ENCODE measurements at regions of chr5 and their contacts with region 1.

Region 1: GRCh38 chr5:176537608-176538504 is 654 bp upstream of the RNF44 start:
- DNase-seq: peak; percentile 84
- ATAC-seq: peak; percentile 73
- H3K4me3 Mint-ChIP-seq: peak overlapping the region; percentile 97
- H3K27ac Mint-ChIP-seq: peak overlapping the region; percentile 95
- H3K4me1 Mint-ChIP-seq: peaks cover 72% of the 10 kb centered on the region
- H3K27me3 Mint-ChIP-seq: no peaks in the 10 kb centered on the region
- CTCF ChIP-seq: no peak

Region 2: GRCh38 chr5:176361437-176362232 is 176.2 kb before region 1 on chr5 and contains the start of gene KIAA1191:
- CTCF ChIA-PET with region 1: no interaction called
- POLR2A ChIA-PET with region 1: interaction called, 14 read pairs
- intact Hi-C with region 1: loop called (anchors 1 kb)
- DNase-seq: peak; percentile 86
- ATAC-seq: peak; percentile 87
- H3K4me3 Mint-ChIP-seq: peak within 1 kb of the TSS; percentile 99
- H3K27ac Mint-ChIP-seq: peak within 1 kb of the TSS; percentile 98
- H3K4me1 Mint-ChIP-seq: peaks cover 28% of the 10 kb centered on the region
- H3K27me3 Mint-ChIP-seq: no peaks in the 10 kb centered on the region
- CTCF ChIP-seq: no peak
- total RNA-seq, gene KIAA1191: 56.6 and 57.5 TPM in 2 replicates

Region 3: DNA sequence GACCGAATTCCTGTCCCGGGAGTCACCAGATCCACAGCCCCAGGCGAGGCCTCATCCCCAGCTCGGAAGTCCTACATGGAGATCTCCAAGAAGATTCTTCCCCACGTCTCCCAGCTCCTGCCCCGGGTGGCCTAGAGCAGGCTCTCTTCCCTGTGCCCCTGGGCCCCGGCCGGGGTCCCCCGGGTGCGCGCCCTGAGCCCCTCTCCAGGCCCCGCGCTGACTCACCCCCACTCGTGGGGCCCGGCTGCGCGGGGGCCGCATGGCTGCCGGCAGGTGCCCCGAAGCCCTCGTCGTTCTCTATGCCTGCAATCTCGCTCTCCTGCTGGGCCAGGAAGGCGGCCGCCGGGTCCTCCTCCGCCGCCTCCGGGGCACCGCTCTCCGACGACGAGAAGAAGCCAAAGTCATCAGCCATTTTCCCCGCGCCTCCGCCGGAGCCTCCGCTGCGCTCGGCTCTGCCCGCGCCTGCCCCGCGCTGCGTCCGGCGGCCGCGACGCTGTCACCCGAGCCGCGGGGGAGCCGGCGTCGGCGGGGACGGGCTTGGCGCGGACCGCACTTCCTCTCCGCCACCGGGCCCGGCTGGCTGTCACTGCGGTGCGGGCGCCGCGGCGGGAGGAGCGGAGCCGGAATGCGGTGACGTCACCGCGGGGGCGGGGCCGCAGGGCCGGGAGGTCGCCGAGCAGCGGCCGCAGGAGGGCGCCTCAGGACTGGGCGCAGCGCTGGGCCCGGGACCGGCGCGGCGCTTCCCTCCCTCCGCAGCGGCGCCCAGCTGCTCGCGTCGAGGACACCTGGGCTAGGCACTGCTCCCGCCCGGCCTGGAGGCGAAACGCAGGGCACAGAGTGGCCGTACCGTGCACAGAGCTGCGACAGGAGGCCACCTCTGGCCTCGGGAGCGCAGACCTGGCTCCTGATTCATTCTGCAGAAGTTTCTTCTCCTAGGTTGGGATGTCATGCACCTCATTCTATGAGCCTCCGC is 121.6 kb before region 1 on chr5 and contains the start of gene CLTB:
- CTCF ChIA-PET with region 1: interaction called, 18 read pairs
- POLR2A ChIA-PET with region 1: interaction called, 22 read pairs
- intact Hi-C with region 1: loop called (anchors 1 kb)
- DNase-seq: peak; percentile 80
- ATAC-seq: peak; percentile 97
- H3K4me3 Mint-ChIP-seq: peak within 1 kb of the TSS; percentile 80
- H3K27ac Mint-ChIP-seq: peak within 1 kb of the TSS; percentile 56
- H3K4me1 Mint-ChIP-seq: peaks cover 26% of the 10 kb centered on the region
- H3K27me3 Mint-ChIP-seq: peaks cover 8% of the 10 kb centered on the region
- CTCF ChIP-seq: no peak
- total RNA-seq, gene CLTB: 29.5 and 48.9 TPM in 2 replicates

Region 4: GRCh38 chr5:176514244-176514950 is 23.5 kb before region 1 on chr5:
- CTCF ChIA-PET with region 1: no interaction called
- POLR2A ChIA-PET with region 1: interaction called, 26 read pairs
- intact Hi-C with region 1: loop called (anchors 1 kb)
- DNase-seq: no peak
- ATAC-seq: peak; percentile 78
- H3K4me3 Mint-ChIP-seq: peak overlapping the region; percentile 71
- H3K27ac Mint-ChIP-seq: peak overlapping the region; percentile 88
- H3K4me1 Mint-ChIP-seq: peaks cover 23% of the 10 kb centered on the region
- H3K27me3 Mint-ChIP-seq: no peaks in the 10 kb centered on the region
- CTCF ChIP-seq: no peak

Region 5: DNA sequence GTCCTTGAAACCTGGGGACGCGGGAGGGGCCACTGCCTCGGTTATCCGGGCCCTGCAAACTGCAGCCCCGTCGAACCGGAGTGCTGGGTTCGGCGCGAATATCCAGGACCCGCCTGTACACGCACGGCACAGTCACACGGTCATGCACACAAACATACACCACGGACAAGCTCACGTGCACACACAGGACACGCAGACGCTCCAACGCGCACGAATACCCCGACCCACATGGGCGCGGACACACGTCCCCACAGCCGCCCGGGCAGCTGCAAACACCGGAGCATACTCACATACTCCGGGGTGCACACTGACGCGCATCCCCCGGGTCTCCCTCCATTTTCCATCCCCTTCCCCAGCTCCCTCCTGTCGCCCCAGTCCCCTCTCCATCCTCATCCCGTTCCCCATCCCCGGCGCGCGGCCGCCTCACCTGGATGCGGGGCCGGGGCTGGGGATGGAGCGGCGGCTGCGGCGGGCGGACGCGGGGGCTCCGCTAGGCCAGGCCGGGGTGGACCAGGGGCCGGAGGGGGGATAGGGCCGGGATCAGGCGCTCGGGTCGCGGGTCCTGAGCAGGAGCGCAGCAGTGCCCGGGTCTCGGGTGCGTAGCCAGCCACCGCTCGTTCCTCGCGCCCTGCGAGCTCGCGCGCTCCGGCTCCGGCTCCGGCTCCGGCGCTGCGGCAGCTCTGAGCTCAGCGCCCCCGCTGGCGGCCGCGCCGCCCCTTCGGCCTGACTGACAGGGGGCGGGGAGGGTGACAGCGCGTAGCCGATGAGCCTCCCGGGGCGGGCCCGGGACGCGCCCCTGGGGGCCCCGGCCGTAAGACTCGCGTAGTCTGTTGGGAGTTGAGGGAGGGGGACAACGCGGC is 92.2 kb after region 1 on chr5 and contains the starts of genes EIF4E1B and SNCB:
- CTCF ChIA-PET with region 1: no interaction called
- POLR2A ChIA-PET with region 1: interaction called, 9 read pairs
- intact Hi-C with region 1: loop called (anchors 5 kb)
- DNase-seq: peak; percentile 69
- ATAC-seq: peak; percentile 97
- H3K4me3 Mint-ChIP-seq: peak within 1 kb of the TSS; percentile 77
- H3K27ac Mint-ChIP-seq: no peak within 1 kb of the TSS
- H3K4me1 Mint-ChIP-seq: peaks cover 51% of the 10 kb centered on the region
- H3K27me3 Mint-ChIP-seq: peaks cover 28% of the 10 kb centered on the region
- CTCF ChIP-seq: no peak
- total RNA-seq, gene EIF4E1B: not detected in 2 replicates
- total RNA-seq, gene SNCB: 0.17 TPM in 1 of 2 replicates, not detected in the other

Region 6: GRCh38 chr5:177006265-177006972 is 468.6 kb after region 1 on chr5 and contains the start of gene UIMC1:
- CTCF ChIA-PET with region 1: no interaction called
- POLR2A ChIA-PET with region 1: no interaction called
- intact Hi-C with region 1: loop called (anchors 2 kb)
- DNase-seq: peak; percentile 93
- ATAC-seq: peak; percentile 89
- H3K4me3 Mint-ChIP-seq: peak within 1 kb of the TSS; percentile 93
- H3K27ac Mint-ChIP-seq: peak within 1 kb of the TSS; percentile 95
- H3K4me1 Mint-ChIP-seq: peaks cover 32% of the 10 kb centered on the region
- H3K27me3 Mint-ChIP-seq: no peaks in the 10 kb centered on the region
- CTCF ChIP-seq: no peak
- total RNA-seq, gene UIMC1: 72.5 and 75.8 TPM in 2 replicates

Region 7: GRCh38 chr5:177290816-177291596 is 753.1 kb after region 1 on chr5:
- CTCF ChIA-PET with region 1: no interaction called
- POLR2A ChIA-PET with region 1: no interaction called
- intact Hi-C with region 1: no loop called
- DNase-seq: no peak
- ATAC-seq: peak; percentile 63
- H3K4me3 Mint-ChIP-seq: peak overlapping the region; percentile 56
- H3K27ac Mint-ChIP-seq: peak overlapping the region; percentile 84
- H3K4me1 Mint-ChIP-seq: peaks cover 35% of the 10 kb centered on the region
- H3K27me3 Mint-ChIP-seq: no peaks in the 10 kb centered on the region
- CTCF ChIP-seq: no peak

Region 8: DNA sequence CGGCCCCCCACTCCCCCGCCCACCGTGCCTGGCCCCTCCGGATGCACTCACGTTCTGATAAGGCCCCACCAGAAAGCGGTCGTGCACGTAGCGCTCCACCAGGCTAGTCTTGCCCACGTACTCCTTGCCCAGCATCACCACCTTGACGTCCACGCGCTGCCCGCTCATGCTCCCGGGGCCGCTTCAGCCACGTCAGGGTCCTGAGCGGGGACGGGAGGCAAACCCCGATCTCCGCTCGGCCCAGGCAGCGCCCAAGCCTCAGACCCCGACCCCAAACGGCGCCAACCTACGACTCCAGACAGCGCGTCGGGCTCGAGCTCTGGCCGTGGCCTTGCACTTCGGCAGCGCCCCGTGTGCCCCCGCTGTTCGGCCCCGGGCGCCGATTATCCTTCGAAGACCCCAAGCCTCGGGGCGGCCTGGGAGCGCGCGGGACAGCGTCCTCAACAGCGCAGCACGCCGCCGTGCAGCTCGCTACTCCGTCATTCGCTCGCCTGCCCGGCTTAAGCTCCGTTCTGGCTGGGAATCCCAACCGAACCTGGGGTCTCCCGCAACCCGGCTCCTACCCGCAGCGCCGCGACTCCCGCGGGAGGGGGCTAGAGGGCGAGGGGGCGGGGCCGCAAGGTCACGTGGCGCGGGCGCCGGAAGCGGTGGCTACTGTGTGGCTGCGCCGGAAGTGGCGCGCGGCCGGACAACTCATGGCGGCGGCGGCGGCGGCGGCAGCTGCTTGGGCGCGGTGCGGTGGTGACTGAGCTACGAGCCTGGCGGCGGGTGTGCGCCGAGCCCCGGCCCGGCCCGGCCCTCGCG is 765.5 kb after region 1 on chr5 and contains the starts of genes PRELID1 and RAB24:
- CTCF ChIA-PET with region 1: no interaction called
- POLR2A ChIA-PET with region 1: no interaction called
- intact Hi-C with region 1: loop called (anchors 5 kb)
- DNase-seq: peak; percentile 93
- ATAC-seq: peak; percentile 41
- H3K4me3 Mint-ChIP-seq: peak within 1 kb of the TSS; percentile 90
- H3K27ac Mint-ChIP-seq: peak within 1 kb of the TSS; percentile 89
- H3K4me1 Mint-ChIP-seq: peaks cover 75% of the 10 kb centered on the region
- H3K27me3 Mint-ChIP-seq: no peaks in the 10 kb centered on the region
- CTCF ChIP-seq: no peak
- total RNA-seq, gene PRELID1: 141 and 160 TPM in 2 replicates
- total RNA-seq, gene RAB24: 35.6 and 36.3 TPM in 2 replicates

Measured in activated B cell treated with CpG ODN at 0.5 μM for 24 hours (primary cell).